Heart left ventricle (tissue), 16 donors: ENCODE measurements at regions of chr12 and their contacts with region 1.

Region 1: DNA sequence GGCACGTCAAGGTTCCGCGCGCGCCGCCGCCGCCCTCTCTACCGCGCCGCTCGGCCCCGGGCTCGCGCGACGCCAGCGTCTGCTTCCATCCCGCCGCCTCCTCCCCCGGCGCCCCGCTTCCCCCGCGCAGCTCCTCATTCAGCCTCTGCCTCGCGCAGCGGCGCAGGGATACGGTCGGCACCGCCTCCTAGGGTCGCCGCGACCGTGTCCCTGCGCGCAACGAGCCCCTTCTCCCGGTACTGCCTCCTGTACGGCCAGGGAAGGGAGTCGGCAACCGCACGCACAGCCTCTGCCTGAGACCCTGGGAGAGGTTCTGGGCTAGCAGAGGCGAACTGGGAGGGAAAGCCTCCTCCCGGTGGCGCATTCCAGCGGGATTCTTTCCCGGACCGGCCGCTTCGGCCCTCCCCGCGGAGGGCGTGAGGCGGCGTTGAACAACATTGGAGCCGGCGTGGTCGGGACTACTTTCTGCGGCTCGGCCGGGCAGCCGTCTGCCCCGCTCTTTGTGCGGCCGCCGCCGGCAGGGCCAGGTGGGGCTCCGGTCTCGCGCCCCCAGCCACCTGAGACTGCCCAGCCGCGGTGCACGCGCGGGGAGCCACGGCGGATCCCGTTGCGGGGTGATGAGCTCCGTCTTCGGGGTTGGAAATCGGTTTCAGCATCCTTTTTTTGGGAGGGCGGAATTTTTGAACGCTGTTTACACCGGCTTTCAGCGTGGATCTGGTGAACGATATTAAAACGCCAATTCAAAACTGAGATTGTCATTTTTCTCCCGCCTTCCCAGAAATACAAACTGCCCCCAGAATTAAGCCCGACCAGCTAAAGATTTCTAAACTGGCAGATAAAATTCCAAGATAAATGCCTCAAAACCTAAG is at the start of gene LRP6:
- DNase-seq: peak; percentile 93 to 95 (median 94)
- ATAC-seq: peak; percentile 94 to 99 (median 98)
- H3K4me3 ChIP-seq: peak within 1 kb of the TSS; percentile 69 to 97 (median 84)
- H3K27ac ChIP-seq: peak within 1 kb of the TSS; percentile 94 to 100 (median 99)
- H3K4me1 ChIP-seq: peaks cover 0 to 29% (median 16%) of the 10 kb centered on the region in 12 donors
- H3K27me3 ChIP-seq: peaks cover 0 to 18% (median 0%) of the 10 kb centered on the region in 9 donors
- CTCF ChIP-seq: peak in 2 of 12 donors; percentile 9 to 13
- POLR2A ChIP-seq: peak in 1 of 2 donors; percentile 45
- total RNA-seq, gene LRP6: 13.2 to 29.6 (median 17.6) TPM

Region 2: GRCh38 chr12:11446372-11446771 is 820.7 kb before region 1 on chr12:
- intact Hi-C with region 1: no loop called
- DNase-seq: no peak
- ATAC-seq: no peak
- H3K4me3 ChIP-seq: no peak overlapping the region
- H3K27ac ChIP-seq: no peak overlapping the region
- H3K4me1 ChIP-seq: no peaks in the 10 kb centered on the region
- H3K27me3 ChIP-seq: no peaks in the 10 kb centered on the region
- CTCF ChIP-seq: no peak
- POLR2A ChIP-seq: no peak

Region 3: GRCh38 chr12:12081836-12082497 is 185.1 kb before region 1 on chr12:
- intact Hi-C with region 1: loop called in 1 of 10 experiments (anchors 5 kb)
- DNase-seq: peak in 1 of 5 donors; percentile 31
- ATAC-seq: peak; percentile 72 to 93 (median 81)
- H3K4me3 ChIP-seq: no peak overlapping the region
- H3K27ac ChIP-seq: peak overlapping the region; percentile 11 to 79 (median 68)
- H3K4me1 ChIP-seq: peaks cover 0 to 9% (median 2%) of the 10 kb centered on the region in 12 donors
- H3K27me3 ChIP-seq: no peaks in the 10 kb centered on the region
- CTCF ChIP-seq: peak in 11 of 12 donors; percentile 24 to 60 (median 44)
- POLR2A ChIP-seq: no peak

Region 4: DNA sequence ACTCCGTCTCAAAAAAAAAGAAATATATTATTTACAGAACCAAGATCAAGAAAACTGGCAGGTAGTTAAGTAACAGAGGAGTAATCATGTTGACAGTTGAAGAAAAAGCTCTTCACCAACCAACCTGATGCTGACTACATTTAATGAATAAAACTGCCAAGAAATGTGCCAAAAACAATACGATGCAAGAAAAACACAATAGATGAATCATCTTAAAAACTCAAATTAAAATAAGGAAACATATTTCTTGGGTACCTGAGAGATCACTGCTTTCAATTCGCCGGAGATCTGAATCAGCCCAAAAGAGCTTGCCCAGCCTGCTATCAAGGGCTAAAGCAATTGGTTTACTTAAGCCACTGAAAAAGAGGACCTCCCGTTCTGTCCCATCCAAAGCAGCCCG is 120.0 kb before region 1 on chr12:
- intact Hi-C with region 1: loop called in 1 of 10 experiments (anchors 10 kb)
- DNase-seq: no peak
- ATAC-seq: no peak
- H3K4me3 ChIP-seq: no peak overlapping the region
- H3K27ac ChIP-seq: no peak overlapping the region
- H3K4me1 ChIP-seq: no peaks in the 10 kb centered on the region
- H3K27me3 ChIP-seq: no peaks in the 10 kb centered on the region
- CTCF ChIP-seq: no peak
- POLR2A ChIP-seq: no peak

Region 5: DNA sequence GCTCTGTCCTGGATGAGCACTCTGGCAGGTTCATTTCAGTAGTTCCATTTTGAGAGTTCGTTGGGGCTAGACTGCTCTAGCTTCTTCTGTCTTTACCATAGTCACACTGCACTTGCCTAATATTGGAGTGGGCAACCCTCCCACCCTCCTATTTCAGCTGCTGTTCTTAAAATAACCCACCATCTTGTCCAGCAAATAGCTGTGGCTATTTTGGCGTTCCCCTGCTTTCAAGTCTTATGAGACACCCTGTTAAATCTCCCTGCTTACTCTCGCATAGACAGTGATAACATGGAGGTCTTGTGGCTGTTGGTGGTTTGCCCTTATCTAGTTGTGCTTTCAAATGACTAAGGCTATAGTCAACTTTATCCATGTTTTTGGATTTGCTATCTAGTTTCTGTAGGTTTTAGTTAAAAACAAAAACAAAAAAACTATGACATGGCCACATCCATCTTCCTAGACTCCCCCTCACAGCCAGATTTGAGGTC is 65.8 kb before region 1 on chr12:
- intact Hi-C with region 1: loop called in 2 of 10 experiments (anchors 5 to 10 kb)
- DNase-seq: peak in 2 of 5 donors; percentile 13 to 25
- ATAC-seq: peak; percentile 82 to 89 (median 85)
- H3K4me3 ChIP-seq: no peak overlapping the region
- H3K27ac ChIP-seq: peak overlapping the region in 6 of 12 donors; percentile 19 to 61 (median 43)
- H3K4me1 ChIP-seq: peaks cover 0 to 8% (median 0%) of the 10 kb centered on the region in 12 donors
- H3K27me3 ChIP-seq: no peaks in the 10 kb centered on the region
- CTCF ChIP-seq: no peak
- POLR2A ChIP-seq: no peak

Region 6: GRCh38 chr12:12327802-12328201 is 60.7 kb after region 1 on chr12:
- intact Hi-C with region 1: loop called in 7 of 10 experiments (anchors 5 to 10 kb)
- DNase-seq: no peak
- ATAC-seq: peak in 3 of 4 donors; percentile 41 to 57 (median 57)
- H3K4me3 ChIP-seq: no peak overlapping the region
- H3K27ac ChIP-seq: peak overlapping the region in 6 of 12 donors; percentile 0 to 63 (median 36)
- H3K4me1 ChIP-seq: peaks cover 0 to 12% (median 8%) of the 10 kb centered on the region in 12 donors
- H3K27me3 ChIP-seq: no peaks in the 10 kb centered on the region
- CTCF ChIP-seq: peak; percentile 45 to 84 (median 70)
- POLR2A ChIP-seq: no peak